HEK293T (cell line): ENCODE measurements at regions of chr7 and their contacts with region 1.

Region 1: GRCh38 chr7:16657656-16658279 is 11.8 kb downstream of the BZW2 start:
- DNase-seq: peak; percentile 14

Region 2: GRCh38 chr7:16528520-16528919 is 129.2 kb before region 1 on chr7:
- CTCF ChIA-PET with region 1: no interaction called
- POLR2A ChIA-PET with region 1: no interaction called
- DNase-seq: no peak

Region 3: DNA sequence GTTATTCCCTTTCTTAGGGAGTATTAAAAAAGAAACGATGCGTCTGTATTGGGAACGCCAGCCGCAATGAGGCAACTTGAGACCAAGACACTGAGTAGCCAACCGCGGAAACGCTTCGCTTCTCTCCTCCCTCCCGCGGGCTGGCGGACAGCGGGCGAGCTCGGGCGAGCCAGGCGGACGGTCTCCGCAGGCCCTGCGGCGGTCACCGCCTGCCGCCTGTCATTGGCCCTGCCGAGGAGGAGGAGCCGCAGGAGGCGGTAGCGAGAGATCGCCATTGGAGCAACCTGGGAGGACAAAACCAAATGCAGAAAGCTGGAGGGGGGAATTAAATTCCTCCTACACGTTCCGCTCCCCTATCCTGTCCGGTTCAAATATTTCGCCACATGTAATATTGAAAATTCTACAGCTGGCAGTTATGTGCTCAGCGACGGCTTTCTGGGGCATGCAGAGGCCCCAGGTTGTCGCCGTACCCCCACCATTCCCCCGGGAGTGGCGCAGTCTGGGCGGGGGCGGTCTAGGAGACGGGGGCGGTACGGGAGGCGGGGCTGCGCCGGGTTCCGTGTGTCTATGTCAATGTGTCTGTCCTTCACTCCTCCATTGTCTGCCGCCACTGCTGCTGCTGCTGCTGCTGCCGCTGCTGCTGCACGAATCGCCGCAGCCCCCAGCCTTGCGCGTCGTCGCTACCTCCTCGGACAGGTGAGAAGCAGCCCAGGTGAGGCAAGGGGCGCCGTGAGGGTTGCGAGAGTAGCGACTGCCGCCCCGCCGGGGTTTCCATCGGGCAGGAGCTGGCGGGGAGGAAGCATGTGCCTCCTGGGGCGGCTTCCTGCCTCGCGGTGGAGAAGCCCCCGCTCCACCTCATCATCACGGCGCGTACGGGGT is 11.9 kb before region 1 on chr7 and contains the starts of genes ANKMY2 and BZW2:
- CTCF ChIA-PET with region 1: no interaction called
- POLR2A ChIA-PET with region 1: interaction called, 10 read pairs
- DNase-seq: peak; percentile 93

Region 4: DNA sequence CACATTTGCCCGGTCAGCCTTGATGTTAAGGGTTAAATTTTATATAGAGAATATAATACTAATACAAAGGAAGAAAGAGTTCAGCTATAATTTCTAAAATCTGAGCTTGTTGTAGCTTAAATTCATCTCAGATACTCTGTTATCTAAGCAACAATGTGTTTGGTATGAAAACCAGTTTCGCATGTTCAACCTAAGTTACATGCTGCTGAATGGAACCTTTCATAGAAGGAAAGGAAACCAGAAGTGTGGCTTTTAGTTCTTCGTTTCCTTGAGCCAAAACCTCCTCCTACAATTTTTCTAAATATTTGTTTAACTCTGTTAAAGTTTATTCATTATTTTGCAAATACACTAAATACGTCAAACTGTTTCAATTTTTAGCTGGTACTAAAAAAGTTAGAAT is 128.5 kb after region 1 on chr7:
- CTCF ChIA-PET with region 1: no interaction called
- POLR2A ChIA-PET with region 1: no interaction called
- DNase-seq: no peak